MCF 10A (cell line): ENCODE measurements at regions of chr4 and their contacts with region 1.

Region 1: GRCh38 chr4:127732613-127733328 is 2.6 kb downstream of the SLC25A31 start:
- DNase-seq: peak; percentile 58
- H3K4me3 Mint-ChIP-seq: no peak overlapping the region
- H3K27ac Mint-ChIP-seq: no peak overlapping the region
- H3K4me1 Mint-ChIP-seq: no peaks in the 10 kb centered on the region
- H3K27me3 Mint-ChIP-seq: no peaks in the 10 kb centered on the region
- CTCF ChIP-seq: peak; percentile 56

Region 2: GRCh38 chr4:127548990-127549925 is 183.5 kb before region 1 on chr4:
- CTCF ChIA-PET with region 1: no interaction called
- POLR2A ChIA-PET with region 1: no interaction called
- intact Hi-C with region 1: no loop called
- DNase-seq: no peak
- H3K4me3 Mint-ChIP-seq: no peak overlapping the region
- H3K27ac Mint-ChIP-seq: peak overlapping the region; percentile 9
- H3K4me1 Mint-ChIP-seq: peaks cover 6% of the 10 kb centered on the region
- H3K27me3 Mint-ChIP-seq: no peaks in the 10 kb centered on the region
- CTCF ChIP-seq: no peak

Region 3: DNA sequence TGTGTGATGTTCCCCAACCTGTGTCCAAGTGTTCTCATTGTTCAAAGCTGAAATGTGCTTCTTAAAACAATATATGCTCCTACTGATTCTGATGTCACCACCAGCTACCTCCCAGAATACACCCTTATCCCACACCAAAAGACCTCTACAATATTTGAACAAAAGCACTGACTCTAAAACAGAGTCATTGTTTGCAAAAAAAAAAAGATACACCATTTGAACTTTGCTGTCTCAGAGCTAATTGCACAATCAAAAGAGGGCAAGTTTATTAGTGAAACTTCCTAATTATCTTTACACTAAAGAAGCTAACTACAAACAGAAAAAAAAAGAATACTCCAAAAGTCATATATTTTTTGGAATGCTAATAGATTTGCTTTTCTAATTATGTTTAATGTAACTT is 134.1 kb before region 1 on chr4:
- CTCF ChIA-PET with region 1: interaction called, 236 read pairs
- POLR2A ChIA-PET with region 1: interaction called, 3 read pairs
- intact Hi-C with region 1: no loop called
- DNase-seq: no peak
- H3K4me3 Mint-ChIP-seq: no peak overlapping the region
- H3K27ac Mint-ChIP-seq: no peak overlapping the region
- H3K4me1 Mint-ChIP-seq: no peaks in the 10 kb centered on the region
- H3K27me3 Mint-ChIP-seq: no peaks in the 10 kb centered on the region
- CTCF ChIP-seq: no peak

Region 4: GRCh38 chr4:127616898-127617297 is 115.9 kb before region 1 on chr4:
- CTCF ChIA-PET with region 1: interaction called, 22 read pairs
- POLR2A ChIA-PET with region 1: no interaction called
- intact Hi-C with region 1: no loop called
- DNase-seq: no peak
- H3K4me3 Mint-ChIP-seq: no peak overlapping the region
- H3K27ac Mint-ChIP-seq: no peak overlapping the region
- H3K4me1 Mint-ChIP-seq: no peaks in the 10 kb centered on the region
- H3K27me3 Mint-ChIP-seq: peaks cover 33% of the 10 kb centered on the region
- CTCF ChIP-seq: no peak

Region 5: DNA sequence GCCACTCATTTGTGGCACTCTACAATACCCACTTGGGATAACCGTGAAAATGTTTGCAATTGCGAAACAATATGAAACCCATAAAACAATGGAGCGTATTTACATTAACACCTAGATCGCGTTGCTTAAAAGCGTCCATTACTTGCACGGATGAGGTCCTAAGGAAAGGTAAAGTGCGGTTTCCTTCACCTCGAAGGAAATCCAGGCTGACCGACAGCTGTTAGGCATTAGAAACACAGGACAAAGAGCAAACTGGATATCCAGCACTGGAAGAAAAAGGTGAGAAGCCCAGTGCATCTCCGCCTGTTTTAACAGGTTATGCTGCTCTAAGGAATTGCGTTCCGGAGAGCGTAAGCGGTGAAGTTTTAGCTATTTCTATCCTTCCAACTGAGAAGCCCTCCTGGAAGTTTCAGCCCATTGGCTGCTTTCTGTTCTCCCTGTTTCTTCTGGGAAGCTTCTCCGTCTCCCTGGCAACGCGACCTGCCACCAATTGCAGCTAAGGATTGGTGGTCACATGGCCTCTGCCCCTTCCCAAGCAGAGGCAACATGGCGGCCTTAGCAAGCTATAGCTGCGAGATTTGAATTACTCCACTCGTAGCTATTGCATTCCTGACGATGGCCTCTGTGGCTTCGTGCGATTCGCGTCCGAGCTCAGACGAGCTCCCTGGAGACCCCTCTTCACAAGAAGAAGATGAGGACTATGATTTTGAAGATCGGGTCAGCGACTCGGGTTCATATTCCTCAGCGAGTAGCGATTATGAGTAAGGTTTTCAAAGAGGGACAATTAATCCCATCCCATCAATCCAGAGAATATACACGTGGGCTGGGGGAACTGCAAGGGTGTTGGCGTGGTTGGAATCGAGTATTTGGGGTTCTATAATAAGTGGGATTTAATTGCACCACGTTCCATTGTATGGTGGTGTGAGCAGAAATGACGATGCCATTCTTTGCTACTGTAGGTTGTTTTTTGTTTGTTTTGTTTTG is 100.1 kb before region 1 on chr4 and contains the start of gene INTU:
- CTCF ChIA-PET with region 1: interaction called, 10 read pairs
- POLR2A ChIA-PET with region 1: interaction called, 6 read pairs
- intact Hi-C with region 1: no loop called
- DNase-seq: peak; percentile 97
- H3K4me3 Mint-ChIP-seq: peak within 1 kb of the TSS; percentile 96
- H3K27ac Mint-ChIP-seq: peak within 1 kb of the TSS; percentile 97
- H3K4me1 Mint-ChIP-seq: peaks cover 7% of the 10 kb centered on the region
- H3K27me3 Mint-ChIP-seq: no peaks in the 10 kb centered on the region
- CTCF ChIP-seq: no peak
- total RNA-seq, gene INTU: 5.9 and 9.2 TPM in 2 replicates

Region 6: GRCh38 chr4:127643791-127644190 is 89.0 kb before region 1 on chr4:
- CTCF ChIA-PET with region 1: no interaction called
- POLR2A ChIA-PET with region 1: no interaction called
- intact Hi-C with region 1: no loop called
- DNase-seq: no peak
- H3K4me3 Mint-ChIP-seq: no peak overlapping the region
- H3K27ac Mint-ChIP-seq: no peak overlapping the region
- H3K4me1 Mint-ChIP-seq: peaks cover 6% of the 10 kb centered on the region
- H3K27me3 Mint-ChIP-seq: no peaks in the 10 kb centered on the region
- CTCF ChIP-seq: no peak

Region 7: GRCh38 chr4:127759228-127759820 is 26.6 kb after region 1 on chr4:
- CTCF ChIA-PET with region 1: interaction called, 10 read pairs
- POLR2A ChIA-PET with region 1: no interaction called
- intact Hi-C with region 1: no loop called
- DNase-seq: no peak
- H3K4me3 Mint-ChIP-seq: no peak overlapping the region
- H3K27ac Mint-ChIP-seq: no peak overlapping the region
- H3K4me1 Mint-ChIP-seq: no peaks in the 10 kb centered on the region
- H3K27me3 Mint-ChIP-seq: no peaks in the 10 kb centered on the region
- CTCF ChIP-seq: no peak